BJ (cell line): ENCODE measurements at regions of chr16 and their contacts with region 1.

Region 1: GRCh38 chr16:82630688-82631087 is 3.9 kb downstream of the CDH13 start:
- DNase-seq: no peak
- H3K4me3 ChIP-seq: no peak overlapping the region
- H3K27me3 ChIP-seq: no peaks in the 10 kb centered on the region
- CTCF ChIP-seq: peak; percentile 44; the same call in 1 of the 2 replicates

Region 2: GRCh38 chr16:82603784-82604411 is 26.8 kb before region 1 on chr16:
- CTCF ChIA-PET with region 1: interaction called, 10 read pairs
- POLR2A ChIA-PET with region 1: no interaction called
- DNase-seq: no peak
- H3K4me3 ChIP-seq: no peak overlapping the region
- H3K27me3 ChIP-seq: peaks cover 2% of the 10 kb centered on the region; the same call in 1 of the 2 replicates
- CTCF ChIP-seq: peak; percentile 83

Region 3: GRCh38 chr16:82761236-82761635 is 130.5 kb after region 1 on chr16:
- CTCF ChIA-PET with region 1: no interaction called
- POLR2A ChIA-PET with region 1: no interaction called
- DNase-seq: no peak
- H3K4me3 ChIP-seq: no peak overlapping the region
- H3K27me3 ChIP-seq: no peaks in the 10 kb centered on the region
- CTCF ChIP-seq: no peak

Region 4: DNA sequence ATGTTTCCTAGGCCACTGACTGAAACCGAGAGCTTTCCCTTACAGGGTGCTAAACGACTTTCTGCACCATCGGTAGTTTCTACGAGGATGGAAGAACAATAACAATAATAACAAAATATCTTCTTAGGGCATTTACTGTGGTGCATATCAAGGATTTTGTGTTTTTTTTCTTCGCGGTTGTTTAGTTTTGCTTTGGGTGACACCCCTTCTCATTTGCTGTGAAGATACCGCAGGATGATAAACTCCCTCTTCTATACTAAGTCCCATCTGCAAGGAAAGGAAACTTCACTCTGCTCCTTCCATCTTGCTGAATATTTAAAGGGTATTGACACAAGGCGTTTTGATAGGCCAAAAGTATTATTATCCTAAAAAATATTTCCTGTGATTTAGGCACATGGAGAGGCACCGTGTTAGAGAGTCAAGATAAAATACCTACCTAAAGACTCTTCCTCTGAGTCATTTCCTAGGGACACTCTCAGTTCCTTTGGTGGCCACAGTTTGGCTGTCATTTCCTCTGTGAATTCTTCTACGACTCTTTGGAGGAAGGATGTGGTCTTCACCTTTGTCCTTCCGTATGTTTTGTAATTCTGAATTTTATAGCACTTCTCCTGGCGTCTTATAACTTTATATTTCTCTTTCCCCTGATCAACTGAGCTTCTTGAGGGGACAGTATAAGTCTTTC is 314.9 kb after region 1 on chr16:
- CTCF ChIA-PET with region 1: no interaction called
- POLR2A ChIA-PET with region 1: no interaction called
- DNase-seq: no peak
- H3K4me3 ChIP-seq: no peak overlapping the region
- H3K27me3 ChIP-seq: no peaks in the 10 kb centered on the region
- CTCF ChIP-seq: no peak